ENCODE measurements at regions of chr16 and their contacts with region 1.

Region 1: GRCh38 chr16:28538733-28539596 is at the start of gene NUPR1:
- DNase-seq: peak; percentile 99
- H3K4me3 Mint-ChIP-seq: peak within 1 kb of the TSS; percentile 79
- H3K27ac Mint-ChIP-seq: peak within 1 kb of the TSS; percentile 96
- H3K4me1 Mint-ChIP-seq: peaks cover 39% of the 10 kb centered on the region
- H3K27me3 Mint-ChIP-seq: no peaks in the 10 kb centered on the region
- CTCF ChIP-seq: no peak
- total RNA-seq, gene NUPR1: 291 and 345 TPM in 2 replicates

Region 2: GRCh38 chr16:28090646-28091377 is 448.2 kb before region 1 on chr16:
- CTCF ChIA-PET with region 1: no interaction called
- POLR2A ChIA-PET with region 1: no interaction called
- intact Hi-C with region 1: no loop called
- DNase-seq: no peak
- H3K4me3 Mint-ChIP-seq: no peak overlapping the region
- H3K27ac Mint-ChIP-seq: no peak overlapping the region
- H3K4me1 Mint-ChIP-seq: no peaks in the 10 kb centered on the region
- H3K27me3 Mint-ChIP-seq: no peaks in the 10 kb centered on the region
- CTCF ChIP-seq: peak; percentile 12

Region 3: DNA sequence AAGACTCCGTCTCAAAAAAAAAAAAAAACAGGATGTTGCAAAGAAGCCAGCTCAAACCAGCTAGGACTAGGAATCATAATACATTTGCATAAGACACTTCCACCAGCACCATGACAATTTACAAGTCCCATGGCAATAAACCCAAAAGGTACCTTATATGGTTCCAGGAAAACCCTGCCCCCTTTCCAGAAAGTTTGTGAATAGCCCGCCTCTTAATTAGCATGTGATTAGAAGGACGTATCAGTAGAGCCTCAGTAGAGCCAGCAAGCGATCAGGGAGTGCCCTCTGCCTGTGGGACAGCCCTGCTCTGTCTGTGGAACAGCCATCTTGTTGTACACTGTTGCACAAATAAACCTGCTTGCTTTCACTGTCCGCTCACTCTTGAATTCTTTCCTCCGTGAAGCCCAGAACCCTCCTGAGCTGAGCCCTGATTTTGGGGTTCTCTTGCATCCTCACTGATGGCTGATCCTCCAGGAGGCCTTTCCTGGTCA is 14.2 kb before region 1 on chr16:
- CTCF ChIA-PET with region 1: no interaction called
- POLR2A ChIA-PET with region 1: interaction called, 11 read pairs
- intact Hi-C with region 1: no loop called
- DNase-seq: no peak
- H3K4me3 Mint-ChIP-seq: no peak overlapping the region
- H3K27ac Mint-ChIP-seq: no peak overlapping the region
- H3K4me1 Mint-ChIP-seq: no peaks in the 10 kb centered on the region
- H3K27me3 Mint-ChIP-seq: no peaks in the 10 kb centered on the region
- CTCF ChIP-seq: no peak

Region 4: DNA sequence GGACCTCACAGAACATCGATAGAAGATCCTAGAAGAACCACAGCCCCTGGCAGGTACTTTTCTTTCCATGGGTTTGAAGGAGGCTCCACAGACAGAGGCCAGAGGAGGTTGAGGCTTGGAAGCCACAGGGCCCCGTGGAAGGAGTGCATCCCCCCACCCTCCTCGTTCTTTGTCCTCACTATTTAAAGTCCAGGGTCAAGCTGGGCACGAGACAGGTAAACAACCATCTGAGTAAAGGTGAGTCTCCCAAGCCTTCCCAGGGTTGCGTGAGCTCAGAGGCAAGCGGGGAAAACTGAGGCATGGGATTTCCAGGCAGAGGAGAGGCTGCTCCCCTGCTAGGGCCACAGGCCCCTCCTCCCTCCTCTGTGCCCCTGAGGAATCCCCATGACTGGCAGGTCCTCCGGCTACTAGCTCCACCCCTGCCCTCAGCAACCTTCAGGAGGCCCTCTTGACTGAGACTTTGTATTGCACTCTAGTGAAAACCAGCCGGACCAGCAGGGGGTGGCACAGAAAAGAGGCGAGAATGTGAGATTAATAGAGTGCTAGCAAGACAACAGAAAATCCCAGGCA is 58.8 kb after region 1 on chr16:
- CTCF ChIA-PET with region 1: no interaction called
- POLR2A ChIA-PET with region 1: no interaction called
- intact Hi-C with region 1: no loop called
- DNase-seq: no peak
- H3K4me3 Mint-ChIP-seq: no peak overlapping the region
- H3K27ac Mint-ChIP-seq: no peak overlapping the region
- H3K4me1 Mint-ChIP-seq: peaks cover 4% of the 10 kb centered on the region
- H3K27me3 Mint-ChIP-seq: no peaks in the 10 kb centered on the region
- CTCF ChIP-seq: no peak